Right ventricle myocardium superior (tissue), 1 donor: ENCODE measurements at regions of chr3 and their contacts with region 1.

Region 1: DNA sequence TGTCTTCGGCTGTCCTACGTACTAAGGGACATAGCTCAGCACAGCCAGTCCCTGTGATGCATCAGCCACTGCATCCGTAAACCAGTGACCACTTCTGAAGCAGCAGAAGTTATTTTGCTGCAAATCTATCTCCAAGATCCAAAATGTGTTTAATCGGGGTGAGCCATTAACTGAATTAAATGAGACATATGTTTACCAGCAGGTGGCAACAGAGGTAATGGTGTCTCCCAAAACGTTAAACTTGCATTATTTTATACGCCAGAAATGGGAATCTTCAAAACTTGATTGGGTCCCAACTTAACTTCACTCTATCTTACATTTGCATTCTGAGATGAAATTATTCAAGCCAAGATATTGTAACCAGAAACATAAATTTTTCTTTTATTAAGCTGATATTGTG is 75.3 kb upstream of the BOC start:
- DNase-seq: no peak
- ATAC-seq: no peak

Region 2: GRCh38 chr3:113019182-113020137 is 116.6 kb before region 1 on chr3:
- intact Hi-C with region 1: no loop called
- DNase-seq: peak; percentile 94
- ATAC-seq: peak; percentile 99

Region 3: GRCh38 chr3:113051787-113052186 is 84.3 kb before region 1 on chr3:
- intact Hi-C with region 1: loop called (anchors 2 kb)
- DNase-seq: no peak
- ATAC-seq: peak; percentile 56

Region 4: GRCh38 chr3:113287803-113288648 is 152.0 kb after region 1 on chr3:
- intact Hi-C with region 1: loop called (anchors 2 kb)
- DNase-seq: no peak
- ATAC-seq: peak; percentile 72